MCF 10A (cell line): ENCODE measurements at regions of chr17 and their contacts with region 1.

Region 1: GRCh38 chr17:7931709-7932482 is at the starts of genes CNTROB and TRAPPC1:
- DNase-seq: peak; percentile 98
- H3K4me3 Mint-ChIP-seq: peak within 1 kb of the TSS; percentile 95
- H3K27ac Mint-ChIP-seq: peak within 1 kb of the TSS; percentile 96
- H3K4me1 Mint-ChIP-seq: peaks cover 22% of the 10 kb centered on the region
- H3K27me3 Mint-ChIP-seq: no peaks in the 10 kb centered on the region
- CTCF ChIP-seq: no peak
- total RNA-seq, gene CNTROB: 31.5 and 39.2 TPM in 2 replicates
- total RNA-seq, gene TRAPPC1: 80.0 and 104 TPM in 2 replicates

Region 2: GRCh38 chr17:7844292-7845154 is 87.4 kb before region 1 on chr17:
- CTCF ChIA-PET with region 1: no interaction called
- POLR2A ChIA-PET with region 1: interaction called, 11 read pairs
- intact Hi-C with region 1: no loop called
- DNase-seq: peak; percentile 96
- H3K4me3 Mint-ChIP-seq: peak overlapping the region; percentile 79
- H3K27ac Mint-ChIP-seq: peak overlapping the region; percentile 87
- H3K4me1 Mint-ChIP-seq: peaks cover 27% of the 10 kb centered on the region
- H3K27me3 Mint-ChIP-seq: no peaks in the 10 kb centered on the region
- CTCF ChIP-seq: no peak

Region 3: DNA sequence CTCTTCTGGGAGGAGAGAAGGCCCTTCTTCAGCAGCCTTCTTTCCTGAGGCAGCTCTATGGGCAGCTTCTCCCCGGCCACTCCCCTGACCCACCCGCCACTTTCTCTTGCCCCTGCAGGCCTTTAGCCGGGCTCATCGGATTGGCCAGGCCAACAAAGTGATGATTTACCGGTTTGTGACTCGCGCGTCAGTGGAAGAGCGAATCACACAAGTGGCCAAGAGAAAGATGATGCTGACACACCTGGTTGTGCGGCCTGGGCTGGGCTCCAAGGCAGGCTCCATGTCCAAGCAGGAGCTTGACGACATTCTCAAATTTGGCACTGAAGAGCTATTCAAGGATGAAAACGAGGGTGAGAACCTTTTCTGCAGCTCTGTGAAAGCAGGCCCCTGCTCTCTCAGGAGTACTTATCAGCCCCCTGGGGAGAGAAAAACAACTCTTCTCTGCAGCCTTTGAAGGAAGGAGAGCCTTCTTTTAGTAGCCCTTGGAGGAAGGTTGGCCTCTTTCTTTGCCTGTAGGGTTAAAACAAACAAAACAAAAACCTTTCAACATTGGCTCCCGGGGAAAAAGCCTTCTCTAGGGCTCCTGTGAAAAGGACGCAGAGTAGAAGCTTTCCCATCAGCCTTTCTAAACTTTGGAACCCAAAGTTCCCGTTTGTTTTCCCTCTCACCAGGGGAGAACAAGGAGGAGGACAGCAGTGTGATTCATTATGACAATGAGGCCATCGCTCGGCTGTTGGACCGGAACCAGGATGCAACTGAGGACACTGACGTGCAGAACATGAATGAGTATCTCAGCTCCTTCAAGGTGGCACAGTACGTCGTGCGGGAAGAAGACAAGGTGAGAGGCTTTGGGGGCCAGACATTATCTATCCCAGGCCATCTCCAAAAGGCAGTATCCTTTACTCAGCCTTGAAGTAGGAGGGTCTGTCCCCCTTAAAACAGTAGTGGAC is 28.5 kb before region 1 on chr17:
- CTCF ChIA-PET with region 1: no interaction called
- POLR2A ChIA-PET with region 1: interaction called, 10 read pairs
- intact Hi-C with region 1: no loop called
- DNase-seq: no peak
- H3K4me3 Mint-ChIP-seq: no peak overlapping the region
- H3K27ac Mint-ChIP-seq: peak overlapping the region; percentile 21
- H3K4me1 Mint-ChIP-seq: no peaks in the 10 kb centered on the region
- H3K27me3 Mint-ChIP-seq: no peaks in the 10 kb centered on the region
- CTCF ChIP-seq: no peak

Region 4: DNA sequence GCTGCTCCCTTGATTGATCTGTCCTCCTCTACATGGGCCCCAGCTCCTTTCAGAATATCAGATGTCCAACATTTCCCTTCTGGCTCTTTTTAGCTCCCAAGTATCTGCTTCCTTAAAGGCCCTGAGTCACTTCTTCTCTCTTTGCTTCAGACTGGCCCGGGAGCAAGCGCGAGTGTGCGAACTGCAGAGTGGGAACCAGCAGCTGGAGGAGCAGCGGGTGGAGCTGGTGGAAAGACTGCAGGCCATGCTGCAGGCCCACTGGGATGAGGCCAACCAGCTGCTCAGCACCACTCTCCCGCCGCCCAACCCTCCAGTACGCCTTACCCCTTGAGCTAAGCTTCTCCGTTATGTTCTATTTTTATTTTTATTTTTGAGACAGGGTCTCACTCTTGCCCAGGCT is 12.4 kb after region 1 on chr17:
- CTCF ChIA-PET with region 1: interaction called, 7 read pairs
- POLR2A ChIA-PET with region 1: interaction called, 18 read pairs
- intact Hi-C with region 1: no loop called
- DNase-seq: no peak
- H3K4me3 Mint-ChIP-seq: no peak overlapping the region
- H3K27ac Mint-ChIP-seq: no peak overlapping the region
- H3K4me1 Mint-ChIP-seq: peaks cover 5% of the 10 kb centered on the region
- H3K27me3 Mint-ChIP-seq: no peaks in the 10 kb centered on the region
- CTCF ChIP-seq: no peak

Region 5: GRCh38 chr17:8016632-8017478 is 85.0 kb after region 1 on chr17:
- CTCF ChIA-PET with region 1: interaction called, 6 read pairs
- POLR2A ChIA-PET with region 1: interaction called, 25 read pairs
- intact Hi-C with region 1: no loop called
- DNase-seq: peak; percentile 87
- H3K4me3 Mint-ChIP-seq: peak overlapping the region; percentile 51
- H3K27ac Mint-ChIP-seq: peak overlapping the region; percentile 95
- H3K4me1 Mint-ChIP-seq: peaks cover 44% of the 10 kb centered on the region
- H3K27me3 Mint-ChIP-seq: no peaks in the 10 kb centered on the region
- CTCF ChIP-seq: peak; percentile 90

Region 6: DNA sequence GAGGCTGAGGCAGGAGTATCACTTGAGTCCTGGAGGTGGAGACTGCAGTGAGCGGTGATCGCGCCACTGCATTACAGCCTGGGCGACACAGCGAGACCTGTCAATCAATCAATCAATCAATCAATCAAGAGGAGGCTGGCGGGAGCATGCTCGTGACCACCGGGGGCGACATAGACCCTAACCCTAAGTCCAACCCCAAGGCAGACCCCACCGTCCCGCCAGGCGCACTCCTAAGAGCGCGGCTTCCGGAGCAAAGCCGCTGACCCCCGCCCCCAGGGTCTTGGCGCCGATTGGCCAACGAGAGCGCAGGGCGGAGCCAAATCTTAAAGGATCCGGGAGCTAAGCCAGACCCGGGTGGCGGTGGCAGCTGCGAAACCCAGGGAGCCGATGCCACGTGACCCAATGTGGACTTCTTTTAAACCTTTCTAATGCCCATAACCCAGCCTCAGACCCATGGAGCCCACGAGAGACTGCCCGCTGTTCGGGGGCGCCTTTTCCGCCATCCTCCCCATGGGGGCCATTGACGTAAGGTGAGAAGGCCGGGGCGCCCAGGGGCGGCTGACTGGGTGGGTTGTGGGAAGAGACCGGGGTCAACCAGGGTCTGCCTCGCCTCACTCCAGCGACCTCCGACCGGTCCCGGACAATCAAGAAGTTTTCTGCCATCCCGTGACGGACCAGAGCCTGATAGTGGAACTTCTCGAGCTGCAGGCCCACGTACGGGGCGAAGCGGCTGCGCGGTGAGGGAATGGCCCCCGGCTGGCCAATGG is 356.6 kb after region 1 on chr17 and contains the start of gene RANGRF:
- CTCF ChIA-PET with region 1: no interaction called
- POLR2A ChIA-PET with region 1: no interaction called
- intact Hi-C with region 1: no loop called
- DNase-seq: peak; percentile 85
- H3K4me3 Mint-ChIP-seq: peak within 1 kb of the TSS; percentile 90
- H3K27ac Mint-ChIP-seq: peak within 1 kb of the TSS; percentile 88
- H3K4me1 Mint-ChIP-seq: peaks cover 10% of the 10 kb centered on the region
- H3K27me3 Mint-ChIP-seq: no peaks in the 10 kb centered on the region
- CTCF ChIP-seq: no peak
- total RNA-seq, gene RANGRF: 38.6 and 41.8 TPM in 2 replicates